OCI-LY7 (cell line): ENCODE measurements at regions of chr1 and their contacts with region 1.

Region 1: GRCh38 chr1:9929431-9930385 is 13.5 kb downstream of the LZIC start:
- DNase-seq: no peak
- H3K4me3 ChIP-seq: no peak overlapping the region
- H3K27ac ChIP-seq: no peak overlapping the region
- H3K4me1 ChIP-seq: peaks cover 6% of the 10 kb centered on the region
- CTCF ChIP-seq: no peak

Region 2: GRCh38 chr1:9842781-9843577 is 86.7 kb before region 1 on chr1:
- CTCF ChIA-PET with region 1: no interaction called
- POLR2A ChIA-PET with region 1: no interaction called
- intact Hi-C with region 1: no loop called
- DNase-seq: no peak
- H3K4me3 ChIP-seq: no peak overlapping the region
- H3K27ac ChIP-seq: no peak overlapping the region
- H3K4me1 ChIP-seq: peaks cover 29% of the 10 kb centered on the region
- CTCF ChIP-seq: no peak

Region 3: DNA sequence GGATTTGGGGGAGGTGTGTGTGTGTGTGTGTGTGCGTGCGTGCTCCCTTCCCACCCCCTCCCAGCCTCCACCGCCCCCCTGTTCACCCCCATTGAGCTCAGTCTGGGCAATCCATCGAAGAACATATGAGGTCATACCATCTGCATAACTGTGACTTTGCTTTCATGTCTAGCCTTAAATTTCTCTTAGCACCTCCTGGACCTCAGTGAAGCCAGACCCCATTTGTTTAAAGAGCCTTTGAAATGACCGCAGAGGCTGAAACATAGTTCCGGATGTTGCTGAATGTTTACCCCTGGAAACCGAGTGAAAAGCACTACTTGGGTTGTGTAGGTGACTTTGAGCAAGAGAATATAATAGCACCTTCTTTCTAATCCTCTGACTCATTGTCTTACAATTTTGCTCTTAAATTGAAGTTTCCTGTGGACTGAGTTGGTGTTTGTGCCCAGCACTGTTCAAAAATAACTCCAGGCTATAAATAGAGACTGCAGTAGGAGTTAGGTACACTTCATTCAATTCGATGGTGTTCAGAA is 178.5 kb after region 1 on chr1:
- CTCF ChIA-PET with region 1: no interaction called
- POLR2A ChIA-PET with region 1: no interaction called
- intact Hi-C with region 1: no loop called
- DNase-seq: no peak
- H3K4me3 ChIP-seq: no peak overlapping the region
- H3K27ac ChIP-seq: no peak overlapping the region
- H3K4me1 ChIP-seq: no peaks in the 10 kb centered on the region
- CTCF ChIP-seq: no peak

Region 4: DNA sequence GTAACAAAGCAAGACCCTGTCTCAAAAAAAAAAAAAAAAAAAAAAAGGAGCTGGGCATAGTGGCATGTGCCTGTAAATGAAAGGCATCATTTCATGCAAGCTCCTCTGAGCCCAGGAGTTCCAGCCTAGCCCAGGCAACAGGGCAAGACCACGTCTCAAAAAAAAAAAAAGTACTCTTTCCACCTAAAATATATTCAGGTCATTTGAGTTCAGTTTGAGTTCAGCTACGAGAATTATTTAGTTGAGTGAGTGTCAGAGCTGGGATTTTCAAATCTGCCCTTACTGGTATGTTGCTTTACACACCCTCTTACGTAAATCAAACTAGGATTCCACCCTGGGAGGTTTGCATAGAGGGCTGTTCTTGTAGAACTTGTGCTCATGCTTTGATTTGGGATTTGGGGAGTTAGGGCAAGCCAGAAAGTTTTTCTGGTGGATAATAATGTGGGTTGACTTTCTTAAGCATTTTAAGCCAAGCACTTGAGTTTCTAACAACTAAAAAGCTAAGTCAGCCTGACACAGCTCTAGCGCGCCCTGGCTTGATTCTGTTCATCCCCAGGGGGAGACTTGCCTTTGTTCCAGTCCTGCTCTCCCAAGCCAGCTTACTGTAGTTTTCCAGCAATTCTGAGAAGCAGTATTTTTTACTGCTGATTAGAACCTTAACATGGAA is 457.8 kb after region 1 on chr1:
- CTCF ChIA-PET with region 1: no interaction called
- POLR2A ChIA-PET with region 1: interaction called, 10 read pairs
- intact Hi-C with region 1: no loop called
- DNase-seq: no peak
- H3K4me3 ChIP-seq: peak overlapping the region; percentile 22
- H3K27ac ChIP-seq: peak overlapping the region; percentile 23
- H3K4me1 ChIP-seq: peaks cover 16% of the 10 kb centered on the region
- CTCF ChIP-seq: no peak